H1 (cell line): ENCODE measurements at regions of chr3 and their contacts with region 1.

Region 1: GRCh38 chr3:128254116-128254768 is 101.0 kb downstream of the EEFSEC start:
- DNase-seq: no peak
- H3K4me3 ChIP-seq: no peak overlapping the region
- H3K27ac ChIP-seq: no peak overlapping the region
- H3K4me1 ChIP-seq: 0 out of 7 replicates have a peak, but pooled peaks cover 0 to 5% (median 0%) of the 10 kb centered on the region in 4 experiments
- H3K27me3 ChIP-seq: no peaks in the 10 kb centered on the region
- CTCF ChIP-seq: no peak
- EP300 ChIP-seq: no peak
- POLR2A ChIP-seq: no peak
- RAD21 ChIP-seq: no peak

Region 2: GRCh38 chr3:128242818-128243601 is 11.2 kb before region 1 on chr3:
- CTCF ChIA-PET with region 1: interaction called, 11 read pairs
- POLR2A ChIA-PET with region 1: no interaction called
- DNase-seq: peak in 1 of 2 experiments; percentile 29
- H3K4me3 ChIP-seq: no peak overlapping the region
- H3K27ac ChIP-seq: no peak overlapping the region
- H3K4me1 ChIP-seq: peaks cover 0 to 5% (median 0%) of the 10 kb centered on the region in 4 experiments; a peak in 1 of 7 replicates
- H3K27me3 ChIP-seq: no peaks in the 10 kb centered on the region
- CTCF ChIP-seq: no peak
- EP300 ChIP-seq: no peak
- POLR2A ChIP-seq: no peak
- RAD21 ChIP-seq: no peak

Region 3: DNA sequence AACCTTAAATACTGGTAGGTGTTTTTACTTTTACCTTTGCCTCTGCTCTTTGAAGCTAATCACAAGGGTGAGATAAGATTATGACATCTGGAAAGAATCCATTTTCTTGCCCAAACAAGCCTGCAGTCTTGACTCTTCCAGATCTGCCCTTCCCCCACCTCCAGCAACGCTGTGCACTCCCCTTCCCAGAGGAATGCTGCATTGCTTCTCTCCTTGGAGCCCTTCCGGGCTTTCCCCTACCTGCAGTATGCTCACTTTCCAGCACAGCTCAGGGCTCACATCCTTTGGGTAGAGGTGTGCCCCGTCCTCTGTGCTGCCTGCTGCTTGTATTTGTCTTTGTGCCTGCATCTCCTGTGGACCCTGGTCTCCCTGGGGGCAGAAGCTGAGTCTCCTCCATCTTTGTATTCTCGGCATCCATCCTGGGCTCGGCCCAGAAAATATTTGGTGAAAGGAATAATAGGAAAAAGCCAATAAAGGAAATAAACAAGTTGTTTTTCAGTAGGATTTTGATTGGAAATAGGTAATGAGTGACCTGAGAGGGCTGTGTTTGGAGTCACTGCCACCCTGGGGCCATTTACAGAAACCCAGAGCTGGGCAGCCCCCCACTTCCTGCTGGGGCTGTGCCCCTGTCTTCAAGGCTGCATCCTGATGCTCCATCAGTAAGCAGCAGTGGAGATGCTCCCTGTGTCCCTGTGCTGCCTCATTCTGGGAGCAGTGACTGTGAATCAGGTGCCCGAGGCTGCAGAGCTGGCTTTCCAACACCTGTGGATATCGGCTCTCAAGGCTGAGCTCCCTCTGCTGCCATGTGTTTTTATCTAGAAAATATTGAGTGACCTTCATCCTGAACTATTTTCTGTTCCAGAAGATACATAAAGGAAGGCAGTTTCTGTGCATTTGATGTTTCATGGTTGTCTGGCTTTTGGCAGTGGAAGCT is 16.6 kb after region 1 on chr3:
- CTCF ChIA-PET with region 1: interaction called, 24 read pairs
- POLR2A ChIA-PET with region 1: interaction called, 3 read pairs
- DNase-seq: peak in 1 of 2 experiments; percentile 50
- H3K4me3 ChIP-seq: peak overlapping the region in 1 of 4 experiments; percentile 14; a peak in 1 of 8 replicates
- H3K27ac ChIP-seq: no peak overlapping the region
- H3K4me1 ChIP-seq: peaks cover 6 to 20% (median 13%) of the 10 kb centered on the region in 4 experiments
- H3K27me3 ChIP-seq: no peaks in the 10 kb centered on the region
- CTCF ChIP-seq: no peak
- EP300 ChIP-seq: no peak
- POLR2A ChIP-seq: no peak
- RAD21 ChIP-seq: no peak

Region 4: GRCh38 chr3:128278761-128279600 is 24.7 kb after region 1 on chr3:
- CTCF ChIA-PET with region 1: interaction called, 12 read pairs
- POLR2A ChIA-PET with region 1: no interaction called
- DNase-seq: peak in 1 of 2 experiments; percentile 59
- H3K4me3 ChIP-seq: no peak overlapping the region
- H3K27ac ChIP-seq: no peak overlapping the region
- H3K4me1 ChIP-seq: peaks cover 31 to 75% (median 47%) of the 10 kb centered on the region in 4 experiments
- H3K27me3 ChIP-seq: peaks cover 0 to 12% (median 7%) of the 10 kb centered on the region in 4 experiments; a peak in 3 of 7 replicates
- CTCF ChIP-seq: peak in 2 of 3 experiments; percentile 4 to 12; a peak in 1 of 4 replicates
- EP300 ChIP-seq: no peak
- POLR2A ChIP-seq: no peak
- RAD21 ChIP-seq: peak in 1 of 2 experiments; percentile 17; a peak in 1 of 4 replicates